ENCODE measurements at regions of chr6 and their contacts with region 1.

Region 1: GRCh38 chr6:14792118-14792955 is 453.5 kb upstream of the JARID2 start:
- DNase-seq: no peak

Region 2: DNA sequence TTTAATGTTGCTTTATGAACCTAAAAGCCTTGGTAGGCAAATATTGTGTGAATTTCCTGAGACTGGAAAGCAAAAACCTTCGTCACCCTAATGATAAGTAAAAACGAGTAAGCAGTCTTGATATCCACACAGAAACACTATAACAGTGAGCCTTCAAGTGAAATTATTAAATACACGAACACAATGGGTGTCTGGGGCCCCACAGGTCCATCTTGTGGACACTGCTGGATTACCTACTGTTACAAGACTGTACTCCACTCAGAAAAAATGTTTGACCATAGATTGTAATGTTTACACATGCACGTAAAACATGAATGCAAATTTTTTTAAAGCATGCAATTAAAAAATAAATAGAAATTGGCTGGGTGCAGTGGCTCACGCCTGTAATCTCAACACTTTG is 207.9 kb before region 1 on chr6:
- intact Hi-C with region 1: no loop called
- DNase-seq: no peak

Region 3: GRCh38 chr6:14735956-14736486 is 56.3 kb before region 1 on chr6:
- intact Hi-C with region 1: loop called in 1 of 2 experiments (anchors 2 kb)
- DNase-seq: no peak

Region 4: GRCh38 chr6:14804785-14805210 is 12.5 kb after region 1 on chr6:
- intact Hi-C with region 1: no loop called
- DNase-seq: peak; percentile 92

Region 5: DNA sequence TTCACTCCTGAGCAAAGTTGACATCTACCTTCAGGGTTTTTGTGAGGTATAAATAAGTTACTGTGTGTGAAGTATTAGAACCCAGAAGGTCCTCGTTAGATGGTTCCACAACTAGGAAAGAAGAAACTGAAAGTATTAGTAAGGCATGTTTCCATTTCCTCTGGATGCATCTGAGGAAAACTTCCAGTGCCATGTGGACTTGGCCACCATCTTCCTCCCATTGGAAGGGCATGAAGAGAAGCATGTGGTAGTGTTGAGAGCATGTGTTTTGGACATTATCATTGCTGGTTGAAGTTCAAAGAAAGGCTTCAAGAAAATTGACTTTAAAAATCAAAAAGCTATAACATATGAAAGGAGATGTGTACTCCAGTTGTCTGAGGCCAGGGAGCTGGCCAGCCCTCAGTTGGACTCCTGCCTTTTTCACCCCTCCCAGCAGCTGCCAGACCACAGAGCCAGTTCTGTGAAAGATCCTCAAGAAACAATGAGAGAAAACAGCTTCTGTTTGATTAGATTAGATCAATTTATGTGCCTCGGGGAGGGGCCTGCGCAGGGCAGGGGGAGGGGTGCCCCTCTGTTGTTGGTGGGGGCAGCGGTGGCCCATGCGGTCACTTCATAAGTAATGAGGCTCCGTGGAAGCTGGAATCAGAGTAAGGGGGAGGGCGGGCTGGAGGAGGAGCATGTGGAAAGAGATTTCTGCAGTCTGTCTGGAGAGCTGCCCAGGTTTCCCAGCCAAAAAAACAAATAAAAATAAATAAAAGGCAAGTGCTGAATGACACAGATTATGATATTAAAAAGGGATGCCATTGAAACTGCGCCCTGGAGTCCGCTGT is 607.5 kb after region 1 on chr6:
- intact Hi-C with region 1: no loop called
- DNase-seq: peak; percentile 83

Measured in posterior vena cava (tissue), 2 donors.